MCF 10A (cell line): ENCODE measurements at regions of chr6 and their contacts with region 1.

Region 1: DNA sequence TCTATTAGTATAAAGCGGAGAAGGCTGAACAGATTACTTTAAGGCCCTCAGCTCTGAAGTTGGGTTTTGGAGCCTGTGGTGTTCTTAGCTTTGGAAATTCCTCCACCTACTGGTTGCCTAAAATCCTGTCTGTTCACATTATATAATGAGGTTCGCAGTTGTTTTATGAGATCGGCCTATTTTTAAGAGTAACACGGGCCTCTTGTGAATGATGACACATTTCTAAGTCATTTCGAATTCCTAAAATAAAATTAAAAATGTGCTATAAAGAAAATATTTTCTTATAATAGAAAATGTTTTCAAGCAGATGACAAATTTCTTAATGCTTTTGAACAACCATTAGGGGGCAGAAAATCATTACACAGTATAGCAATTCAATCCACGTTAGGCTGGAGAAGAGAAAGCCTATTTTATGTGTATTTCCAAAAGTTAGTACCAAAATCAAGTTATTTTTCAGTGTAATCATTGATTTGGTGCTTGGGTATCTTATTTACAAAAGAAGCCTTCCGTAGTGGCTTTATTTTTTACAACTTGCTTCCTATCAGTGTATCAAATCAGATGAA is 15.8 kb upstream of the FAM8A1 start:
- DNase-seq: peak; percentile 77
- H3K4me3 Mint-ChIP-seq: no peak overlapping the region
- H3K27ac Mint-ChIP-seq: no peak overlapping the region
- H3K4me1 Mint-ChIP-seq: peaks cover 8% of the 10 kb centered on the region
- H3K27me3 Mint-ChIP-seq: no peaks in the 10 kb centered on the region
- CTCF ChIP-seq: peak; percentile 72

Region 2: GRCh38 chr6:16999491-17000436 is 584.6 kb before region 1 on chr6:
- CTCF ChIA-PET with region 1: no interaction called
- POLR2A ChIA-PET with region 1: no interaction called
- intact Hi-C with region 1: no loop called
- DNase-seq: peak; percentile 35
- H3K4me3 Mint-ChIP-seq: no peak overlapping the region
- H3K27ac Mint-ChIP-seq: no peak overlapping the region
- H3K4me1 Mint-ChIP-seq: peaks cover 6% of the 10 kb centered on the region
- H3K27me3 Mint-ChIP-seq: peaks cover 10% of the 10 kb centered on the region
- CTCF ChIP-seq: no peak

Region 3: DNA sequence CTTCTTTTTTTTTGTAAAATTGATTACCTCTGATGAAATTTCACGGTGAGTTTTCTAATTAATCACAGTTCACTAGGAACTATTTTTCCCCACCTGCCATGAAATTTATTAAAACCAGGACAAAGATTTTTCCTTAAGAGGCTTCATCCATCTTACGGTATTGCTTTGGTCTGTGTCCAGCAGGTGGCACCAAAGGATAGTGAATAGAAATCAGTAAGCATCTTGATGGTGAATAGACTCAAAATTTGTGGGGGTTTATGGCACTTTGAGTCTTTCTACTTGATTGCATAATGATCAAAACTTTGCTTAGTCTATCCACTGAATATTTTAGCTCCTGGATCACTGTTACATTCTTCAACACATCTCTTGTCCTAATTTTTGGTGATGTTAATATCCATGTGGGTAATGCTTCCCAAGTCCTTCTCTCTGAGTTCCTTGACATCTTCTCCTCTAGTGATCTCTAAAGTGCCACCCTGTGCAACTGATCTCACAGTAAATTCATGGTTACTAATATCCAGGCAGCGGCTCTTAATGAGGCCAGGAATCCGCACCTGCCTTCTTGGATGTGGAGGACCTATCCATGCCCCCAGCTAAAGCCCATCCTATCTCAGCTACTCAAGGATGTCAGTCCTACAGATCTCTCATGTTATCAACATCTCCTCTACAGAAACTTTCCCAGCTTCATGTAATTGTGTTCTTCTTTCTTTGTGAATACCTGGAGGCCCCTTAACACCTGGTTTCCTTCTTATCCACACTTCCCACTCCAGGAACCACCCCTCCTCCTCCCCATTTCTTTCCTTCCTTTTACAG is 428.0 kb before region 1 on chr6:
- CTCF ChIA-PET with region 1: interaction called, 113 read pairs
- POLR2A ChIA-PET with region 1: interaction called, 3 read pairs
- intact Hi-C with region 1: loop called (anchors 1 kb)
- DNase-seq: peak; percentile 81
- H3K4me3 Mint-ChIP-seq: no peak overlapping the region
- H3K27ac Mint-ChIP-seq: no peak overlapping the region
- H3K4me1 Mint-ChIP-seq: no peaks in the 10 kb centered on the region
- H3K27me3 Mint-ChIP-seq: no peaks in the 10 kb centered on the region
- CTCF ChIP-seq: peak; percentile 65

Region 4: GRCh38 chr6:17281100-17281494 is 303.2 kb before region 1 on chr6 and contains the start of gene RBM24:
- CTCF ChIA-PET with region 1: no interaction called
- POLR2A ChIA-PET with region 1: no interaction called
- intact Hi-C with region 1: loop called (anchors 5 kb)
- DNase-seq: peak; percentile 34
- H3K4me3 Mint-ChIP-seq: peak within 1 kb of the TSS; percentile 76
- H3K27ac Mint-ChIP-seq: no peak within 1 kb of the TSS
- H3K4me1 Mint-ChIP-seq: peaks cover 16% of the 10 kb centered on the region
- H3K27me3 Mint-ChIP-seq: no peaks in the 10 kb centered on the region
- CTCF ChIP-seq: peak; percentile 33
- total RNA-seq, gene RBM24: not detected in 2 replicates

Region 5: DNA sequence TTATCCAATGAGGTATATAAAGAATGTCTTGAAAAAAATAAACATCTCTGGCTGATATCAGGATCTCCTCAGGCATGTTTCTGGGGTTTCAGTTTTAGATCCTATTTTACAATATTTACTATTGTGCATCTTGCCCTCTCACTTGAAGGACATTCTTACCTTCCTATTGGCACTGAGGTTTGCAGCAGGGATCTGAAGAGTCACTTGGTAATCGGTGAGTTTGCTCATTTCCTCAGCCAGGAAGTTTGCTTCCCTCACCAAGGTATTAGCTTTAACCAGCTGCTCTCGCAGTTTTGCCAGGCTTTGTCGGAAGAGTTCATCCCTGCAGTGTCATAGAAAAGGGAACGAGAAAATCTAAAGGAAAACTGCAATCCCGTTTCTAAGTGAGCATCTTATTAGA is 224.3 kb after region 1 on chr6:
- CTCF ChIA-PET with region 1: interaction called, 14 read pairs
- POLR2A ChIA-PET with region 1: no interaction called
- intact Hi-C with region 1: loop called (anchors 1 kb)
- DNase-seq: no peak
- H3K4me3 Mint-ChIP-seq: no peak overlapping the region
- H3K27ac Mint-ChIP-seq: no peak overlapping the region
- H3K4me1 Mint-ChIP-seq: peaks cover 6% of the 10 kb centered on the region
- H3K27me3 Mint-ChIP-seq: no peaks in the 10 kb centered on the region
- CTCF ChIP-seq: no peak